Ascending aorta (tissue), 2 donors: ENCODE measurements at regions of chr10 and their contacts with region 1.

Region 1: GRCh38 chr10:25016376-25017154 is at the start of gene THNSL1:
- DNase-seq: peak; percentile 97 to 99
- H3K4me3 ChIP-seq: peak within 1 kb of the TSS; percentile 74 to 77
- H3K27ac ChIP-seq: peak within 1 kb of the TSS; percentile 85 to 88
- H3K4me1 ChIP-seq: peaks cover 0 to 9% of the 10 kb centered on the region in 2 donors
- H3K27me3 ChIP-seq: no peaks in the 10 kb centered on the region
- CTCF ChIP-seq: no peak
- total RNA-seq, gene THNSL1: 0.64 TPM

Region 2: DNA sequence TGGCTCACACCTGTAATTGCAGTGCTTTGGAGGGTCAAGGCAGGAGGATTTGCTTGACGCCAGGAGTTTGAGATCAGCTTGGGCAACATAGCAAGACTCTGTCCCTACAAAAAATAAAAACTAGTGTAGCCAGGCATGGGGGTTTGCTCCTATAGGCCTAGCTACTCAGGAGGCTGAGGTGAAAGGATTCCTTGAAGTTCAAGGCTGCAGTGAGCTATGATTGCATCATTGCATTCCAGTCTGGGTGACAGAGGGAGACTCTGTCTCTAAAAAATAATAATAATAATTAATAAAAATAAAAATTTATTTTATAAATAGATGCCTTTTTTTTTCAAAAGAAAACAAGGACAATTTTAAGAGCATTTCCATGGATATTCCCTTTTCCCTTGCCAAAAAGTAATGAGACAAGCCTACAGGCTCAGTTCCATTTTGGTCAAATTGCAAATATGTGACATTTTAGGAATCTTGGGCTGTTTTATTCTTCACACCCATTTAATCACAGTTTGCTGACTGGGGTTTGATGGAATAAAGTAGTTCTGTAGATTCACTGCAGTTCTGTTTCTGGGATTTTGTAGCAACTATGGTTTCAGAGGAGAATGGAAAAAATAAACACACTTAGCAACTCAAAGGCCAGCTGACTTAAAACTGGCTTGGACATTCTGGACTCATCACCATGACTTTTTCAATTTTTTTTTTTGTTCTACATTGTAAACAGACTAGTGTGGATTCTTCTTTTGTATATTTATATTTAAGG is 244.4 kb before region 1 on chr10:
- intact Hi-C with region 1: no loop called
- DNase-seq: no peak
- H3K4me3 ChIP-seq: no peak overlapping the region
- H3K27ac ChIP-seq: no peak overlapping the region
- H3K4me1 ChIP-seq: no peaks in the 10 kb centered on the region
- H3K27me3 ChIP-seq: no peaks in the 10 kb centered on the region
- CTCF ChIP-seq: no peak

Region 3: DNA sequence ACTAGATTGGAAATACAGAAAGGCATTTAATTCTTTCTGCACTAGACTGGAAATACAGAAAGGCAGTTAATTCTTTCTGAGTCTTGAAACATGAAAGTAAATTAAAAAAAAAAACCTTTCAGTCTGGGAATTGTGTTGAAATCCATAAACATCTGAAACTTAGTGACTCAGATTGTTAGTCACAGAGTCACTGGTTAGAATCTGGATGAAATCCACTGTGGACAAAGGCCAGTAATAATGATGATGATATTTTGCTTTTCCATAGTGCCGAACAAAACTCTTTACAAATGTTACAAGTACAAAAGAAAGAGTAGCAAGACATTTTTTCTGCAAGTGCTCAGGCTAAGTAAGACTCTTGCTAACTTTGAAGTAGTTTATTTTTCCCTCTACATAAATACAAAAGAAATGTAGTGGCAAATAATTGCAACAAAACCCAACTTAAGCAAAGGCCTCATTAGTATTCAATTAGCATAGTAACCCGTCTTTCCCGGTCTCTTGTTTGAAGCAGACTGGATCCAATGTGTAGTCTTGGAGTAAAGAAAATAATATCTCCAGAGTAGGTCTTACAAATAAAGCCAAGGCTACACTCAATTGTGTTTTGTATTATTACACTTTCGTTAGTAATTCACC is 58.4 kb before region 1 on chr10:
- intact Hi-C with region 1: loop called (anchors 5 kb)
- DNase-seq: no peak
- H3K4me3 ChIP-seq: peak overlapping the region; percentile 20 to 29
- H3K27ac ChIP-seq: peak overlapping the region; percentile 64 to 65
- H3K4me1 ChIP-seq: peaks cover 0 to 13% of the 10 kb centered on the region in 2 donors
- H3K27me3 ChIP-seq: no peaks in the 10 kb centered on the region
- CTCF ChIP-seq: no peak

Region 4: DNA sequence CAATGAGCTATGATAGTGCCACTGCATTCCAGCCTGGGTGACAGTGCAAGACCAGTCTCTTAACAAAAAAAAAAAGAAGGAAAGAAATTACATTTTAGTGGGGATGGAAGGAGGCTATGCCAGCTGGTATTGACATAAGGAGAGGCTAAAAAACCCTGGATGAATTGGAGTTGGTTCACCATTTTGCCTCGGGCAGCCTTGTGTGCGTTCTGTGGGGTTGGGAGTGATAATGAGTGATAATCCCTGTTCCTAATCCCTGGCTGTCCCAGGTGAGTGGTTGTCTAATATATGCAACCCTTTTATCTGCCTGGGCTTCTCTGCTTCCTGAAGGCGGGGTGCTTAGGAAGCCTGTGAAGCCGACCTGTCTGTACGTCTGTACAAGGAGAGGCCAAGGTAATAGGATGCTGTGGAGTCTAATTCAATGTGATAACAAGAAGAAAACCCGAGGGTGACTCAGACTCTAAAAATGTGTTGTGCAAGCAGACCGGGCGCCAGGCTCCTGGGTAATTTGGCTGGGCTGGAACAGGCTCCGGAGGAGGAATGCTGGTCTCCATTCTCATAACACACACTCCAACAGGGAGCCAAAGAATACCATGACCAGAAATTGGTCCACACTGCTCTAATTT is 43.3 kb after region 1 on chr10:
- intact Hi-C with region 1: loop called (anchors 1 kb)
- DNase-seq: peak; percentile 47 to 91
- H3K4me3 ChIP-seq: no peak overlapping the region
- H3K27ac ChIP-seq: peak overlapping the region; percentile 7 to 43
- H3K4me1 ChIP-seq: peaks cover 2 to 28% of the 10 kb centered on the region in 2 donors
- H3K27me3 ChIP-seq: no peaks in the 10 kb centered on the region
- CTCF ChIP-seq: no peak

Region 5: GRCh38 chr10:25080880-25081581 is 64.5 kb after region 1 on chr10:
- intact Hi-C with region 1: loop called (anchors 2 kb)
- DNase-seq: peak; percentile 36 to 91
- H3K4me3 ChIP-seq: peak overlapping the region in 1 of 2 donors; percentile 48
- H3K27ac ChIP-seq: peak overlapping the region; percentile 11 to 75
- H3K4me1 ChIP-seq: peaks cover 0 to 15% of the 10 kb centered on the region in 2 donors
- H3K27me3 ChIP-seq: no peaks in the 10 kb centered on the region
- CTCF ChIP-seq: peak; percentile 77 to 91 (median 86)

Region 6: DNA sequence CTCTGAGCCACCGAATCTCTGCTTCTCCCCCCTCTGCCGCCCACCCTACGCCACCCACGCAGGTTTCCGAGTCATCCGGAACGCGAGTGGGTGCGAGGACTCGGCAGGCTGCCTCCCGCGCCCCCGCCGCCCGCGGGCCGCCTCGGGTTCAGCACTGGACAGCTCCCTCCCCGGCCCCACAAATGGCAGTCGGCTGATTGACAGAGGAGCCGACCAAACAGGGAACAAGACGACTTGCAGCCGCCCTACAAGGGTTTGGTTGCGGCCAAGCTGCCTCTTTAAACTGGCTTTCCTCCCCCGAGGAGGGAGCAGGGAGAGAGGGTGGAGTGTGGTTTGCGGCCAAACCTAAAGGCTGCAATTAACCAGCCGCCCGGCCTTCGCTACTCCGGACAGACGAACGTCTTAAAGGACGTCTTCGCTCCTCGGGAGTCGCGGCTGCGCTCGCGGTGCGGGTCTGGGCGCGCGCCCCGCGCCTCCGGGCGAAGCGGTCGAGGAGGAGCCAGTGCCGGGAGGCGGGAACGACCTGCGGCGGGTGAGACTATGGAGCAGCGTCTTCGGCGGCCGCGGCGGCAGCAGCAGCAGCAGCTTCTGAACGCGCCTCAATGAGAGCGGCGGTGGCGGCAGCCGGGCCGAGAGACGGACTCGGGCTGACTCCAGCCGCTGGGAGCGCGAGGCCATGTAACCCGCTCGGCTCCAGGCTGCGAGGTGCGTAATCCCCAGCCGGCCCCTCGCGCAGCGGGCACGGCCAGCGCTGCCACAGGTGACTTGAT is 158.1 kb after region 1 on chr10 and contains the start of gene GPR158:
- intact Hi-C with region 1: loop called (anchors 2 kb)
- DNase-seq: peak; percentile 53 to 90
- H3K4me3 ChIP-seq: peak within 1 kb of the TSS; percentile 42 to 64
- H3K27ac ChIP-seq: no peak within 1 kb of the TSS
- H3K4me1 ChIP-seq: peaks cover 3 to 15% of the 10 kb centered on the region in 2 donors
- H3K27me3 ChIP-seq: peaks cover 19% of the 10 kb centered on the region
- CTCF ChIP-seq: no peak
- total RNA-seq, gene GPR158: not detected